ENCODE measurements at regions of chr9 and their contacts with region 1.

Region 1: DNA sequence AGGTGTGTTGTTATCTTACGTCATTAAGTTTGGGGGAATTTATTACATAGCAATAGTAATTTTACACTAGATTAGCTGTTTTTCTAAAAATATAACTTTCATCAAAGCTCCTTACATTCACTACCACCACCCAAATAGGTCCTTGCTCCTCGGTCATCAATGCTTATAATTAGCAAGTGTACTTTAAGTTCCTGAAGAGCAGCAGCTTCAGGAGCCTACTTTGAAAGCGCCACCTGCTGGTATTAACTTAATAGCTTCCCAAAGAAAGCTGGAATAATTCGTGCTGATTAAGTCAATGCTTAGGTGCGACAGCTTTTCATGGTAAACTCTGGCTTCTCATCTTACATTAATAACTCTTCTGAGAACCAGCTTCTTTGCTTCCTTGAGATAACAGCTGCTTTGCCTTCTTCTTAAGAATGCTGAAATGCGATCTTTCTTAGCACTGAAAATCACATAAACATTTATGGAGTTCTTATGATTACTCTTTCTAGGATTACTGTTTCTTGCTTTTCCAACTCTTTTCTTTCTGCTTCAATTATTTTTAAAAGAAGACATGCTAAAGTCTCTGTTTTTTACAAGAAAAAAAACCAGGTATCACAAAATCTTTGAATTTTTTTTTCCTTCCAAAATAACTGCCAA is 10.0 kb upstream of the C5 start:
- DNase-seq: no peak
- H3K4me3 Mint-ChIP-seq: no peak overlapping the region
- H3K27ac Mint-ChIP-seq: no peak overlapping the region
- H3K4me1 Mint-ChIP-seq: peaks cover 16% of the 10 kb centered on the region
- H3K27me3 Mint-ChIP-seq: no peaks in the 10 kb centered on the region

Region 2: DNA sequence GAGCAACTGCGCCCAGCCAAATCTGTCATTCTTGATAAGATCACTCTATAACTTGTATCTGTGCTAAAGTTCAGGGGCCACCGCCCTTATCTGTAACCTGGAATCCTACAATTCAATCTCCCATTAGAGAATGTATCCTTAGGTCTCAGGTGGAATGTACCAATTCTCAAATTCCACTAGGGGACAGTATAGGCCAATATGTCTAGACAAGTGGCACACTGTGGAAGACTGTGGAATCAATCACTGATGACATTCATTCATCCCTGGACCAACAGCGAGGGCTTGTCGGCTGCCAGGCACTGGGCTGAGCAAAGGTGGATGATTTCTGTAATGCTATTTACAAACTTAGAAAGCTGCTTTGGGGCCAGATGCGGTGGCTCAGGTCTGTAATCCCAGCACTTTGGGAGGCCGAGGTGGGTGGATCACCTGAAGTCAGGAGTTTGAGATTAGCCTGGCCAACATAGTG is 317.1 kb before region 1 on chr9:
- CTCF ChIA-PET with region 1: interaction called, 13 read pairs
- POLR2A ChIA-PET with region 1: no interaction called
- DNase-seq: no peak
- H3K4me3 Mint-ChIP-seq: no peak overlapping the region
- H3K27ac Mint-ChIP-seq: no peak overlapping the region
- H3K4me1 Mint-ChIP-seq: peaks cover 5% of the 10 kb centered on the region
- H3K27me3 Mint-ChIP-seq: peaks cover 2% of the 10 kb centered on the region

Region 3: DNA sequence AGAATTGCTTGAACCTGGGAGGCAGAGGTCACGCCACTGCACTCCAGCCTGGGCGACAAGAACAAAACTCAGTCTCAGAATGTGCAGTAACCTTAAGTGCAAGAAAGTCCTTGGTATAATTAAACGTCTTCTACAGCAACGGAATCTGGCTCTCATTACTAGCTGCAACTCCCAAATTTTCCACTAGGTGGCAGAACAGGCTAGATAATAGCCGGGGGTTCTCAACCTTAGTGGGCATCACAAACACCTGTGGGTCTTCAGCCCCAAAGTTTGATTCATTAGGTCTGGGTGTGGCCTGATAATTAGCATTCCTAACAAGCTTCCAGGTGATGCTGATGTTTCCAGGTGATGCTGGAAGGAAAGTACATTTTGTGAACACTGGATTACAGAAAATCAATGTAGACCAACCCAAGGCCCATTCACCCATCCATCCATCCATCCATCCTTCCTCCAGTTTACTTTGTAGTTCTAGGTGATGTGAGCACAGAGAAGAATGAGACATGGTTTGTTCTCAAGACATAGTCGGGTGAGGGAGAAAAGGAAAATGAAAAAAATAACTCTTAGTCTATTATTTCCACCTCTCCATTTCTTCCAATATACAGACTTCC is 304.2 kb before region 1 on chr9:
- CTCF ChIA-PET with region 1: interaction called, 38 read pairs
- POLR2A ChIA-PET with region 1: interaction called, 3 read pairs
- DNase-seq: peak; percentile 66
- H3K4me3 Mint-ChIP-seq: no peak overlapping the region
- H3K27ac Mint-ChIP-seq: no peak overlapping the region
- H3K4me1 Mint-ChIP-seq: peaks cover 10% of the 10 kb centered on the region
- H3K27me3 Mint-ChIP-seq: no peaks in the 10 kb centered on the region

Region 4: DNA sequence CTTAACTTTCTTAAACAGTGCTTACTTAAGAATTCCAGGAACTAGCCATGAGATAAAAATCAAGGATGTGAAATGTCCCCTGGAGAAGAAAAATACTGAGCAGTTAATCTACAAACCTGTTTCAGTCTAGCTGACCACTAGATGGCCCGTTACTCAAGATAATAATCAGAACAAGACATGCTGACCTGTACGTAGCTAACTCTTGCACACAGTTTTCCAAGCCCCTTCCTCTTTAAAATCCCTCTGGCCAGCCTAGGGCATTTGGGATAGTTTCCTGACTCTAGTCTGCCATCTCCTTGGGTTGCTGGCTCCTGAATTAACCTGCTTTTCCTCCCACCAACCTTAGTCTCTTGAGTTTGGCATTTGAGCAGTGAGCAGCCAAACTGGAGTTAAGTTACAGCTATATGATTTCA is 74.3 kb before region 1 on chr9:
- CTCF ChIA-PET with region 1: interaction called, 39 read pairs
- POLR2A ChIA-PET with region 1: interaction called, 3 read pairs
- DNase-seq: no peak
- H3K4me3 Mint-ChIP-seq: no peak overlapping the region
- H3K27ac Mint-ChIP-seq: no peak overlapping the region
- H3K4me1 Mint-ChIP-seq: peaks cover 2% of the 10 kb centered on the region
- H3K27me3 Mint-ChIP-seq: peaks cover 5% of the 10 kb centered on the region

Region 5: DNA sequence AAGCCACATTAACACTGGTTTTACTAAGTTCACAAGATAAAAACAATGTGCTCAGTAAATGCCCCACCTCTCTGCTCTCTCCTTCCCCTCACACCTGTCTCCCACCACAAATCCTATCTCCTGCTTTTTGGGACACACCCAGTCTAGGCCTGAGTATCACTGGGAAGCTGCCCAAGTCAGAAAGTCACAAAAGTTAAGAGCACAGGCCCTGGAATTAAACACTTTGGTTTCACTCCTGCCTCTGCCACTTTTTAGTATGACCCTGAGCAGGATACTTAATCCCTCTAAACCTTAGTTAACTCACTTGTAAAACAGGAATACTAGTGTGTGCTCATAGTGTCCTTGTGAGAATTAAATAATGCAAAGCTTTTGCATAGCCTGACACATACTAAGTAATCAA is 21.3 kb before region 1 on chr9:
- CTCF ChIA-PET with region 1: interaction called, 41 read pairs
- POLR2A ChIA-PET with region 1: no interaction called
- DNase-seq: no peak
- H3K4me3 Mint-ChIP-seq: no peak overlapping the region
- H3K27ac Mint-ChIP-seq: no peak overlapping the region
- H3K4me1 Mint-ChIP-seq: peaks cover 9% of the 10 kb centered on the region
- H3K27me3 Mint-ChIP-seq: no peaks in the 10 kb centered on the region

Region 6: DNA sequence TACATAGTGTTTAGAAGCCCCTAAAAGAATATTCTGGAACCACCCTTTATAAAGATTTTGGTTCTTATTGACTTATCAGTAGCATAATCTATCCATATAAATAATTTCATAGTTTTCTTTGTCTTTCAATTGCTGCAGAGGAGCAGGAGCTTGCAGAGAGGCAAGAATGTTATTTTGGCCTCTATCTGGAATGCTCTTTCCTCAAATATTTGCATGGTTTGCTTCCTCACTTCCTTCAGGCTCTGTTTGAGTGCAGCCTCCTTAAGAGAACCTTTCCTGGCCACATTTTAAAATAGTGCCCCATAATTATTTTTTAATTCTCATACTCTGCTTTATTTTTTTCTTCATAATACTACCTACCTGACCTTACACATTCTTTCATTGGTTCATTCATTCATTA is 11.5 kb before region 1 on chr9:
- CTCF ChIA-PET with region 1: interaction called, 32 read pairs
- POLR2A ChIA-PET with region 1: no interaction called
- DNase-seq: no peak
- H3K4me3 Mint-ChIP-seq: no peak overlapping the region
- H3K27ac Mint-ChIP-seq: no peak overlapping the region
- H3K4me1 Mint-ChIP-seq: no peaks in the 10 kb centered on the region
- H3K27me3 Mint-ChIP-seq: no peaks in the 10 kb centered on the region

Region 7: GRCh38 chr9:121074635-121075385 is 14.7 kb after region 1 on chr9 and contains the start of gene CNTRL:
- CTCF ChIA-PET with region 1: interaction called, 22 read pairs
- POLR2A ChIA-PET with region 1: interaction called, 13 read pairs
- DNase-seq: peak; percentile 93
- H3K4me3 Mint-ChIP-seq: peak within 1 kb of the TSS; percentile 96
- H3K27ac Mint-ChIP-seq: peak within 1 kb of the TSS; percentile 91
- H3K4me1 Mint-ChIP-seq: peaks cover 53% of the 10 kb centered on the region
- H3K27me3 Mint-ChIP-seq: no peaks in the 10 kb centered on the region
- total RNA-seq, gene CNTRL: 84.1 to 86.9 TPM

Measured in activated CD4-positive, alpha-beta memory T cell treated with anti-CD3 and anti-CD28 coated beads, Interleukin-2, amount 10 ng/mL, durations not matched to agents 7 days and 5 days (primary cell).